IMR-90 (cell line): ENCODE measurements at regions of chr7 and their contacts with region 1.

Region 1: DNA sequence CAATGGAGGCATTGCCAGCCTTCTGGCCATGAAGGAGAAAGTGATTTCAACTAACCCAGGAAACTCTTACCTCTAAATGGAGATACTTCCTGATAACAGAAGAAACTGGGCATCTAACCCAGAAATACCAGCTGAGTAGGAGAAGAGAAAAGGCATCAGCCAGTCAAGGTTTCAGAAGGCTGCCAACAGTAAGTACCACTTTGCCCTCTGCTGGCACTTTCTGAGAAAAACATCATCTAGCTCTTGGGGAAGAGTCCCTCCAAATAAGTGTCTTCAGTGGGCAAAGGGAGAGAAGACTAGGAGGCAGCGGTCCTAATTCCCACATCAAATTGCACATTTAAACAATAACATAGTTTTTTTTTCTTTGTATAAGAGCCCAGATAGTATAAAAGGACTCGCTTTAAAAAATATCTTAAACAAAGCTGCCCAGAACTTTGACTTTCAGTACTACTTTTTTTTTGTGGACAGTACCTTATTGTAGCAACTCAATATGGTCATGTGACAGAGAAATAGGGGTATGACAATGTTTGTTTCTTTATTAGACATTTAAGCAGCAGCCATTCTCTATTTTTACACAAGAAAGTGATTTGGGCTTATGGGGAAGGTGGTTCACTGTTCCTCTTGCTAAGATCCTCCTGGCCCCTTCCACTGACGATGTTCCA is 157.3 kb downstream of the CTTNBP2 start:
- DNase-seq: peak; percentile 75
- ATAC-seq: peak; percentile 94
- H3K4me3 ChIP-seq: no peak overlapping the region
- H3K27ac ChIP-seq: no peak overlapping the region
- H3K4me1 ChIP-seq: no peaks in the 10 kb centered on the region
- H3K27me3 ChIP-seq: no peaks in the 10 kb centered on the region
- CTCF ChIP-seq: peak; percentile 76
- POLR2A ChIP-seq: no peak
- RAD21 ChIP-seq: peak; percentile 91

Region 2: DNA sequence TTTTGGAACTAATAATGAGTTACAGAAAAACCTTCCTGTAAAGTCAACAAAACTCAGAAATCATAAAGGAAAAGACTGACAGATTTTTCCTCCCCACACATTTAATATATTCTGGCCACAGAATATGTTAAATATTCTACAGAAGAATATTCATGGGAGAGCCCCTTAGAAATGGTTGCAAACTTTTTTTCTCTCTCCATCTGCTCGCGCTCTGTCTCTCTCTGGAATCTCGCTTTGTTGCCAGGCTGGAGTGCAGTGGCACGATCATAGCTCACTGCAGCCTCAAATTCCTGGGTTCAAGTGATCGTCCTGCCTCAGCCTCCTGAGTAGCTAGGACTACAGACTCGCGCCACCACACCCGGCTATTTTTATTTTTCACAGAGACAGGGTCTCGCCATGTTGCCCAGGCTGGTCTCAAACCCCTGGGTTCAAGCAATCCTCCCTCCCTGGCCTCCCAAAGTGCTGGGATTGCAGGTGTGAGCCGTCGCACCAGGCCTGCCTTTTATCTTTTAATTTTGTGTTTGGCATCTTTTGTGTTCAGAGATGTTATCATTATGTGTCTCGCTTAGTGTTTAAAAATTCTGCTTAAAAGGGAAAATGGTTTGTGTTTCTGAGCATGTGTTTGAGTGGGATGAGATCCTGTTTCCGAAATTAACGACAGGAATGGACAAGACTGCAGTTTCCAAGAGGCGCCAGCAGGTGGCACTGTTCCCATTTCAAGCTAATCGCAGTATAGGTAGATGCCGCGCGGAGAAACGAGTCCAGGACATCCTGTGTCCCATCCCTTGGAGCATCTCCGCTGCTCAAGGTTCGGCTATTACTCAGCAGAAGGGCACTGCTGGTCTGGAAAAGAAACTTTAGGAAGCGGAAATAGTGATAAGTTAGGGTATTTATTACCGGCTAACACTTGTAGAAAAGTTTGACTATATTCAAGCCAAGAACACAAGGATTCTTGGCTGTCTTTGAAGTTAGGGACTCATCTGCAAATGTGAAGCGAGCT is 785.7 kb before region 1 on chr7:
- CTCF ChIA-PET with region 1: no interaction called
- POLR2A ChIA-PET with region 1: no interaction called
- dilution Hi-C with region 1: no loop called
- in situ Hi-C with region 1: loop called (anchors 25 kb)
- intact Hi-C with region 1: loop called (anchors 5 kb)
- DNase-seq: peak; percentile 82
- ATAC-seq: peak; percentile 99
- H3K4me3 ChIP-seq: no peak overlapping the region
- H3K27ac ChIP-seq: no peak overlapping the region
- H3K4me1 ChIP-seq: no peaks in the 10 kb centered on the region
- H3K27me3 ChIP-seq: no peaks in the 10 kb centered on the region
- CTCF ChIP-seq: peak; percentile 92
- POLR2A ChIP-seq: 0 out of 2 replicates have a peak, but pooled peaks have one; percentile 30
- RAD21 ChIP-seq: peak; percentile 94

Region 3: DNA sequence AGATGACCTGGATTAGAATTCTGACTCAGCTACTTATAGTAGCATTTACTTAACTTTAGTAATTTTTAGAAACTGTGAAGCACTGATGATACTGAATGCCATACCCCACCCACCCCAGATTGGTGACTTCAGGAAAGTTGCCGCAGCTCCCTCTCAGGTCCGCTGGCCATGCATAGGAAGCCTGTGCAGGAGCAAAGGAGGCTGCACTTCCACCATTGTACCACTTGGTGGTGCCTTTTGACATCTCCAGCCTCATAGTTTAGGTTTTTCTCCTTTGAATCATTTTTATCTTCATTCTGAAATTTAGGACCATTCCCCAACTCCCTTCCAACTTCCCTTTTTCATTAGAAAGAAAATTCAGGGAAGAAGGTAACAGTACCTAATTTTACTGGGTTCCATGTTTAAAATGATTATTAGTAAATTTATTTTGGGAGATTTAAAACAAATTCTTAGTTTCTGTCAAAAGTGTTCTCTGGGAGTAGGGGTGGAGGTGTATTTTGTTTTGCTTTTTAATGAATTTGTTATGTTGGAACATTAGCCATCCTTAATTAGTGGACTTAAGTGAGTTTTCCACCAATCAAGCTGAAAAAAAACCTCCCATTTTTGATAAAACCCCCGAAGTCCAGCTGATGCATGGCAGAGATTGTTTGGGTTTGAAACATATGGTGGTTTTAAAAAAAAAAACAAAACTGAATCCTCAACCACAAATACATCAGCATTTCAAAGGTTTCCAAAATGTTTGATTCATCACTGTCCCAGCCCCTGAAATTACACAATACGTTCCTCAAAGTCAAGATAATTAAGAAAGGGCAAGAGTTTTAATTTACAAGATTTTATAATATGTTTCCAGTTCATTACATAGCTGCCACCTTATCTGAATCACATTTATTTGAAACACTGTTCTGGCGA is 502.7 kb before region 1 on chr7:
- CTCF ChIA-PET with region 1: no interaction called
- POLR2A ChIA-PET with region 1: no interaction called
- dilution Hi-C with region 1: no loop called
- in situ Hi-C with region 1: no loop called
- intact Hi-C with region 1: loop called (anchors 2 kb)
- DNase-seq: peak; percentile 75
- ATAC-seq: peak; percentile 84
- H3K4me3 ChIP-seq: no peak overlapping the region
- H3K27ac ChIP-seq: peak overlapping the region; percentile 60; the same call in 1 of the 2 replicates
- H3K4me1 ChIP-seq: peaks cover 5% of the 10 kb centered on the region
- H3K27me3 ChIP-seq: no peaks in the 10 kb centered on the region
- CTCF ChIP-seq: peak; percentile 91
- POLR2A ChIP-seq: no peak
- RAD21 ChIP-seq: peak; percentile 88

Region 4: GRCh38 chr7:117399820-117400422 is 316.0 kb before region 1 on chr7:
- CTCF ChIA-PET with region 1: interaction called, 4 read pairs
- POLR2A ChIA-PET with region 1: interaction called, 3 read pairs
- dilution Hi-C with region 1: no loop called
- in situ Hi-C with region 1: no loop called
- intact Hi-C with region 1: loop called (anchors 1 kb)
- DNase-seq: peak; percentile 5
- ATAC-seq: no peak
- H3K4me3 ChIP-seq: no peak overlapping the region
- H3K27ac ChIP-seq: no peak overlapping the region
- H3K4me1 ChIP-seq: peaks cover 2% of the 10 kb centered on the region; the same call in 1 of the 2 replicates
- H3K27me3 ChIP-seq: no peaks in the 10 kb centered on the region
- CTCF ChIP-seq: peak; percentile 58
- POLR2A ChIP-seq: no peak
- RAD21 ChIP-seq: peak; percentile 61

Region 5: DNA sequence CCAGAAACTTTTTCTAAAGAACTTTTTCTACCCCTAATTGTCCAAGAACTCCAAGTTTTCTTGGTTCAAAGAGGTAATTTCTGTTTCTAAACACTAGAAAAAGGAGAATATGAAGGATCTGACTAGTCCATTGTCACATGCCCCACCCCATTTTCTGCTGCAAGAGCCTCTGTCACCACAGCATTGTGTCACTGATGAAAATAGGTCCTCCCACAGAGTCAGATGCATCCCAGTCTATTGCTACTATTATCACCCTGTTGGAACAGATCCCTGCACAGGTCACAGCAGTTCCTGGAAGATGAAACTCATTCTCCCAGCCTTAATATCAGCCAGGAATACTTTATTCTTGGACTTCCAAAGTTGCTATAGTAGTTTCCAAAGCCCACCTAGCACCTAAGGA is 243.6 kb before region 1 on chr7:
- CTCF ChIA-PET with region 1: interaction called, 10 read pairs
- POLR2A ChIA-PET with region 1: no interaction called
- dilution Hi-C with region 1: no loop called
- in situ Hi-C with region 1: no loop called
- intact Hi-C with region 1: no loop called
- DNase-seq: no peak
- ATAC-seq: no peak
- H3K4me3 ChIP-seq: no peak overlapping the region
- H3K27ac ChIP-seq: peak overlapping the region; percentile 35; the same call in 1 of the 2 replicates
- H3K4me1 ChIP-seq: no peaks in the 10 kb centered on the region
- H3K27me3 ChIP-seq: no peaks in the 10 kb centered on the region
- CTCF ChIP-seq: no peak
- POLR2A ChIP-seq: no peak
- RAD21 ChIP-seq: no peak